ENCODE measurements at regions of chr6 and their contacts with region 1.

Region 1: GRCh38 chr6:35522660-35523658 is 10.3 kb upstream of the TULP1 start:
- DNase-seq: peak; percentile 61 to 82 (median 74)
- ATAC-seq: peak; percentile 89
- H3K4me3 ChIP-seq: no peak overlapping the region
- H3K4me3 Mint-ChIP-seq: peak overlapping the region; percentile 56 to 84 (median 76)
- H3K27ac ChIP-seq: peak overlapping the region; percentile 53
- H3K27ac Mint-ChIP-seq: peak overlapping the region; percentile 53 to 91 (median 77)
- H3K4me1 ChIP-seq: peaks cover 9 to 19% of the 10 kb centered on the region in 2 donors
- H3K4me1 Mint-ChIP-seq: peaks cover 9 to 32% (median 26%) of the 10 kb centered on the region in 7 donors
- H3K27me3 ChIP-seq: no peaks in the 10 kb centered on the region
- H3K27me3 Mint-ChIP-seq: peaks cover 0 to 2% (median 0%) of the 10 kb centered on the region in 5 donors

Region 2: GRCh38 chr6:35496841-35497570 is 26.0 kb before region 1 on chr6 and contains the start of gene TEAD3:
- CTCF ChIA-PET with region 1: no interaction called
- POLR2A ChIA-PET with region 1: no interaction called
- intact Hi-C with region 1: loop called in 1 of 2 experiments (anchors 2 kb)
- DNase-seq: peak; percentile 25 to 78 (median 49)
- ATAC-seq: peak; percentile 75
- H3K4me3 ChIP-seq: peak within 1 kb of the TSS; percentile 68
- H3K4me3 Mint-ChIP-seq: peak within 1 kb of the TSS; percentile 67 to 87 (median 82)
- H3K27ac ChIP-seq: peak within 1 kb of the TSS; percentile 60
- H3K27ac Mint-ChIP-seq: peak within 1 kb of the TSS in 2 of 9 donors; percentile 47 to 52
- H3K4me1 ChIP-seq: peaks cover 0 to 10% of the 10 kb centered on the region in 2 donors
- H3K4me1 Mint-ChIP-seq: peaks cover 13 to 27% (median 18%) of the 10 kb centered on the region in 7 donors
- H3K27me3 ChIP-seq: peaks cover 0 to 4% of the 10 kb centered on the region in 2 donors
- H3K27me3 Mint-ChIP-seq: peaks cover 0 to 61% (median 10%) of the 10 kb centered on the region in 5 donors
- total RNA-seq, gene TEAD3: 0.16 to 0.27 (median 0.24) TPM in 3 of 5 experiments, not detected in the others

Region 3: GRCh38 chr6:35569011-35569461 is 46.1 kb after region 1 on chr6:
- CTCF ChIA-PET with region 1: interaction called, 6 read pairs
- POLR2A ChIA-PET with region 1: no interaction called
- intact Hi-C with region 1: loop called in 1 of 2 experiments (anchors 5 kb)
- DNase-seq: peak in 5 of 9 donors; percentile 31 to 39 (median 37)
- ATAC-seq: peak; percentile 73
- H3K4me3 ChIP-seq: no peak overlapping the region
- H3K4me3 Mint-ChIP-seq: no peak overlapping the region
- H3K27ac ChIP-seq: peak overlapping the region; percentile 13
- H3K27ac Mint-ChIP-seq: peak overlapping the region in 8 of 9 donors; percentile 18 to 88 (median 54)
- H3K4me1 ChIP-seq: no peaks in the 10 kb centered on the region
- H3K4me1 Mint-ChIP-seq: peaks cover 5 to 19% (median 9%) of the 10 kb centered on the region in 7 donors
- H3K27me3 ChIP-seq: no peaks in the 10 kb centered on the region
- H3K27me3 Mint-ChIP-seq: peaks cover 0 to 22% (median 0%) of the 10 kb centered on the region in 5 donors

Region 4: DNA sequence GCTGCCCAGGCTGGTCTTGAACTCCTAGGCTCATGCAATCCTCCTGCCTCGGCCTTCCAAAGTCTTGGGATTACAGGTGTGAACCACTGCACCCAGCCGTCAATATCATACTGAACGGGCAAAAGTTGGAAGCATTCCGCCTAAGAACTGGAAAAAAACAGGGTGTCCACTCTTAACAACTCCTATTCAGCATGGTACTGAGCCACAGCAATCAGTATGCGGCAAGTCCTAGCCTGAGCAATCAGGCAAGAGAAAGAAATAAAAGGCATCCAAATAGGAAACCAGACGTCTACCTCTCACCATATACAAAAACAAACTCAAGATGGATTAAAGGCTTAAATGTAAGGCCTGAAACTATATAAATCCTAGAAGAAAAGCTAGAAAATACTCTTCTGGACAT is 82.6 kb after region 1 on chr6:
- CTCF ChIA-PET with region 1: no interaction called
- POLR2A ChIA-PET with region 1: no interaction called
- intact Hi-C with region 1: no loop called
- DNase-seq: no peak
- ATAC-seq: no peak
- H3K4me3 ChIP-seq: peak overlapping the region; percentile 11
- H3K4me3 Mint-ChIP-seq: peak overlapping the region in 9 of 10 donors; percentile 55 to 79 (median 73)
- H3K27ac ChIP-seq: peak overlapping the region; percentile 14
- H3K27ac Mint-ChIP-seq: peak overlapping the region; percentile 40 to 95 (median 92)
- H3K4me1 ChIP-seq: peaks cover 50 to 55% of the 10 kb centered on the region in 2 donors
- H3K4me1 Mint-ChIP-seq: peaks cover 26 to 89% (median 74%) of the 10 kb centered on the region in 7 donors
- H3K27me3 ChIP-seq: no peaks in the 10 kb centered on the region
- H3K27me3 Mint-ChIP-seq: no peaks in the 10 kb centered on the region

Region 5: GRCh38 chr6:35624341-35625070 is 101.5 kb after region 1 on chr6:
- CTCF ChIA-PET with region 1: interaction called, 11 read pairs
- POLR2A ChIA-PET with region 1: no interaction called
- intact Hi-C with region 1: loop called in 1 of 2 experiments (anchors 1 kb)
- DNase-seq: peak in 7 of 9 donors; percentile 40 to 75 (median 70)
- ATAC-seq: peak; percentile 88
- H3K4me3 ChIP-seq: no peak overlapping the region
- H3K4me3 Mint-ChIP-seq: peak overlapping the region in 9 of 10 donors; percentile 11 to 49 (median 34)
- H3K27ac ChIP-seq: peak overlapping the region; percentile 66
- H3K27ac Mint-ChIP-seq: peak overlapping the region; percentile 64 to 93 (median 90)
- H3K4me1 ChIP-seq: peaks cover 5 to 35% of the 10 kb centered on the region in 2 donors
- H3K4me1 Mint-ChIP-seq: peaks cover 13 to 66% (median 55%) of the 10 kb centered on the region in 7 donors
- H3K27me3 ChIP-seq: no peaks in the 10 kb centered on the region
- H3K27me3 Mint-ChIP-seq: no peaks in the 10 kb centered on the region

Region 6: DNA sequence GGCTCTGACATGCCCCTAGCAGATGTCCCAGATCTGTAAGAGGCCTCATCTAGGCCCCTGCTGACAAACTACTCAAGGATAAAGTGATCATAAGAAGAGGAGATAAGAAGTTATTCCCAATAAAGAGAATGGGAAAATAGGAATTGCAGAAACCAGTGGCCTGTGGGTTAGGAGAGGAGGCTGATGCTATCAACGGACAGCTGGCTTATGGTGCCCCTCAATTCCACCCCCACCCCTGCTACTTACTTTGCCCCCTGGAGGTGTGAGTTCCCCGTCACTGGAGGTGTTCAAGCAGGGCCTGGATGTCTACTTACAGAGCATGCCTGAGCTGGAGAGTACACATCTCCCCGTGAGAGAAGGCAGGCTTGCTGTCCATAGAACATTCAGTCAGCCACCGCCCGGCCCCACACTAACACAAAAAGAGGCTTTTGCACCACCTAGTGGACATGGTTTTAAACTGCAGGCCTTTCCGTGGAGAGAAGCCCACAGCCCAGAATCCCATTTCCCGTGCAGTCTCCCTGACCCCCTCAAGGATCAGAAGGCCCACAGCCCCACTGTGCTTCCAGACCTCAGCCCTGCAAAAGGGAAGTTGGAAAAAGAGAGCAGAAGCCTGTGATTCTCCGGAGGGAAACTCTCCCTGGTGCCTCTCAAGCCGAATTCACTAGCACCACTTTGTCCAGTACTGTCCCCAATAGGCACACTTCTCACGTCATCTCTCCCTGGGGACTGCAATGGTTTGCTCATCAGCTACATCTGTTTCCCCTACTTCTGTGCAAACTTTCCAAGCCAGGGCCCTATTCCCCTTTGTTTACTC is 837.5 kb after region 1 on chr6:
- CTCF ChIA-PET with region 1: no interaction called
- POLR2A ChIA-PET with region 1: no interaction called
- intact Hi-C with region 1: loop called in 1 of 2 experiments (anchors 2 kb)
- DNase-seq: peak; percentile 37 to 74 (median 66)
- ATAC-seq: peak; percentile 95
- H3K4me3 ChIP-seq: no peak overlapping the region
- H3K4me3 Mint-ChIP-seq: no peak overlapping the region
- H3K27ac ChIP-seq: no peak overlapping the region
- H3K27ac Mint-ChIP-seq: peak overlapping the region in 2 of 9 donors; percentile 24 to 55
- H3K4me1 ChIP-seq: peaks cover 4 to 6% of the 10 kb centered on the region in 2 donors
- H3K4me1 Mint-ChIP-seq: peaks cover 0 to 30% (median 4%) of the 10 kb centered on the region in 7 donors
- H3K27me3 ChIP-seq: no peaks in the 10 kb centered on the region
- H3K27me3 Mint-ChIP-seq: peaks cover 0 to 15% (median 4%) of the 10 kb centered on the region in 5 donors